OCI-LY7 (cell line): ENCODE measurements at regions of chr5 and their contacts with region 1.

Region 1: DNA sequence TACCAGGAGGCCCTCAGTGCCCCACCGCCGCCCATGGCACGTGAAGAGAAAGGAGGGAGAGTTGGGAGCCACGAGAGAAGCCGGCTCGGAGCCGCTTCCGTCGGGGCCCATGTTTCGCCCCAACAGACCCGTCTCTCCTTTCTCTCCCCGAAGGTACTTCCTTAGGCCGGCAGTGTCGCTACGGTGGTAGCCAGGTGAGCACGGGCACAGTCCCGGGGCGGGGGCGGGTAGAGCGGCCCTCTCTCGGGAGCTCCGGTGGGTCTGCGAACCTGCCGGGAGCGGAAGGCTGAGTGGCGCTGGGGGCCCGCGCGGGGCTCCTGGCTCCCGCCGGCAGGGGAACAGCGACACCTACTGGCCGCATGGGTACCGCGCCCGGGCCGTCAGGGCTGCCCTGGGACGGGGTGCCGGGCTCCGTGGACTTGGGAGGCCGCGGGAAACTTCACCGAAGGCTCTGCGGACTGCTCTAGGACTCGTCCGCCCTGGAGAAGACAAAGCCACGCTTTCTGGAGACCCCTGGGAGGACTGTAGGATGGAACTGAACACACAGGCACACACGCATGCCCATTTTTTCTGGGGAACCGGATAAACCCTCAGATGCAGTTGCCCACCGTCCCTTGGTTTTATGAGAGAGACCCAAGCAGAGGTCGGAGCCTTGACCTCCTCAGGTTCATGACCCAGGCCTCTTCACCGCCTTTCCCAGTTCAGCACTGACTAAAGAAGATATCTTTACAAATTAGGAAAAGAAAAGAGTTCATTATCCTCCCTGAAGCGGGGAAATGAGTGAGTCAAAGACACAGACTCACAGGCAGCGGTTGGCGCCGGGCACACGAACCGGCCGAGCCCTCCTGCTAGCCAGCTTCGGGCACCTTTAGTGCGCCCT is 202.5 kb downstream of the MEF2C start:
- DNase-seq: peak; percentile 72
- H3K4me3 ChIP-seq: peak overlapping the region; percentile 27
- H3K27ac ChIP-seq: no peak overlapping the region
- H3K4me1 ChIP-seq: peaks cover 13% of the 10 kb centered on the region
- CTCF ChIP-seq: peak; percentile 88

Region 2: DNA sequence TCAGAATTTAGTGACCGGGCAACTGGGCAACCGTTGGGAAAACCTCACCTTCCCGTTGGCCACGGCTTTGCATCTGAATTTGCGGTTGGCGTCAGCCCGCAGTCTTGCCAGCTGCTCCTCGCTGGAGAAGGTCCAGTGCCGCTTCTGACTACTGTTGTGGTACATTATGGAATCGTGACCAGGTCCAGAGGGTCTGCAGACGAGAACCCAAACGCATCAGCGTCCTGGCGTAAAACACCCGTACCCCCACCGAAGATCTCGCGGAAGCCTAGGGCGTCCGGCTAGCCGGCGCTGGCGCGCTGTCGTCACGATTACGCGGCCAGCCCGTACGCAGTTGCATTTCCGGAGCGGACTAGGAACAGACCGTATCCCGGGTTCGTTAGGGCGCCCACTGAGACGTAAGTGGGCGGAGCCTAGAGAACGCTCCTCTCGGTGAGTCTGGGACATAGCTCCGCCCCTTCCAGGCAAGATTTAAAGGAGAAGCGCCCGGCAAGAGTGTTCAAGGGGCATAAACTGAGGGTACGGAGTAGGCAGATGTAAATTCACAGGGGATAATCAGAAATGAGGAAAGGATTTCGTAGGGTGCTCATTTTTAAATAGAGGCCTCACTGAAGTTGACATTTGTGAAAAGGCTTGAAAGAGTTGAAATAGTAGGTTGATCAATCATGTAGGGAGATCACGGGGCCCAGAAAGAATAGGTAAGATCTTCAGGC is 1267.7 kb before region 1 on chr5 and contains the start of gene CCNH:
- CTCF ChIA-PET with region 1: no interaction called
- POLR2A ChIA-PET with region 1: interaction called, 3 read pairs
- intact Hi-C with region 1: loop called (anchors 2 kb)
- DNase-seq: peak; percentile 99
- H3K4me3 ChIP-seq: peak within 1 kb of the TSS; percentile 93
- H3K27ac ChIP-seq: peak within 1 kb of the TSS; percentile 59
- H3K4me1 ChIP-seq: peaks cover 28% of the 10 kb centered on the region
- CTCF ChIP-seq: no peak
- total RNA-seq, gene CCNH: 96.5 and 98.4 TPM in 2 replicates

Region 3: DNA sequence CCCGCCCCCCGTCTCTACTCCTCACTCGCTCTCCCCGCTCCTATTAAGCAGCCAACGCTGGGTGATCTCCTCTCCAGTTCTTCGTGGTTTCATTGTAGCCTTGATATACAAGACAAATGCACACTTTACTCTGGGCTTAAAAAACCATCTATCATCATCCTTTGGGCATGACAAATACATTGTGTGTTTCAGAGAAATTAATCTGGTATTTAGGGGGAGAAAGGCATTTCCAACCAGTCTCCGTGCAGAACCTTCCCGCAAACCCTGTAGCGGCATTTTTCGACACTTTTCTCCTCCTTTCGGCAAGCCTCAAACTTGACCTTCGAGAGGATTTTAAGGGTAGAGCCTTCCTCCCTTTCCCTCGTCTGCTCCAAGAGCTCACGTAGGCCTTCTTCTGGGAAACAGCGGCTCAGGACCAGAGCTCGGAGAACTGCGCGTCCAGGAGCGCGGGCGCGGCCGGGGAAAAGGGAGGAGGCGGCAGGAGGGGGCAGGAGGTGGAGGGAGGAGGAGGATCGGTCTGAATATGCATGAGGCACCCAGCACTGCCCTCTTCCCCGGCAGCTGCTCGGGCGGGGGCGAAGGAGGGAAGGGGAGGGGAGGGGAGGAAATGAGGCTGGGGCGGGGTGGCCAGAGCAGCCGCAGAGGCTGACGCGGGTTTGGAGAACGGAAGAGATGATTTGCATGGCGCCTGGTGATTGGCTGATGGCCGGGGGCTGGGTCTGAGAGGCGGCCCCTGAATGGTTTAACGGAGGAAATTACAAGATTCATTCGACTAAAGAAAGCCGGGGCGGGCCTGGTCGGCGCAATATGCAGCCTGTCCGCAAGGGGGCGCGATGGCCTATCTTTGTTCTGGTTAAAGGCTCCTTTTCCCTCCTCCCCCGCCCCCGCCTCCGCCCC is 539.4 kb before region 1 on chr5:
- CTCF ChIA-PET with region 1: no interaction called
- POLR2A ChIA-PET with region 1: interaction called, 4 read pairs
- intact Hi-C with region 1: loop called (anchors 2 kb)
- DNase-seq: peak; percentile 54
- H3K4me3 ChIP-seq: no peak overlapping the region
- H3K27ac ChIP-seq: no peak overlapping the region
- H3K4me1 ChIP-seq: peaks cover 5% of the 10 kb centered on the region
- CTCF ChIP-seq: peak; percentile 53

Region 4: DNA sequence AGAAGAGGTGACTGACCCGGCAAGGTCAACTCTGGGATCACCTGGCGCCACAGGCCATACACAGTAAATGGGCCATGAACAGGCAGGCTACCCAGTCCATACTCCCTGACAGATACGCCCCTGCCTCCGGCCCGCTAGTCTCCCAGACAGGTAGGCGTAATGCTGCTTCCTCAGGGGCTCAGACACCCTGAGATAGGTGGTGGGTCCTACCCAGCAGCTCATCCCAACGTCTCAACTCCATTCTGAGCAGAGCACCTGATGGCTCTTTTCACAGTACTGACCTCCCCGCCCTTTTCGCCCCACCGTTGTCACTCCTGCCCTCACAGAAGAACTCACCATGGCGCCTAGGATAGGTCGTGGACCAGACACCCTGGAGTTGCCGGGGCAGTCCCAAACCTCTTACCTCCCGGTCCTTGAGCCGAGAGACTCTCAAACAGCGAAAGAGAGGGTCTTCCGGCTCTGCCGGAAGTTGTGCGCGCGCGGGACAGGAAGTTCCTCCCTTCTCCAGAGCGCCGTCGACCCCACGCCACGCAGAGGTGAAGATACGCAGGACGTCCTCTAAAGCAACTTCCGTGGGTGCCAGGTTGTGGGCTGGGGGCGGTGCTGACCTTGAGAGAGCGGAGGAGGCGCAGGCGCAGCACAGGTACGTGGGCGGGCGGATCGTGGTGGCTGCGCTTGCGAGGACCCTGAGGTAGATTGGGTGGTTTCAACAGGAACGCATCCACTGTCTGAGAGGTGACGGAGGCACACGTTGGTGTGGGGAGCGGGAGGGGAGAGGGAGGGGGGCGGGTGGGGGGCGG is 411.9 kb before region 1 on chr5 and contains the start of gene TMEM161B:
- CTCF ChIA-PET with region 1: no interaction called
- POLR2A ChIA-PET with region 1: no interaction called
- intact Hi-C with region 1: loop called (anchors 2 kb)
- DNase-seq: peak; percentile 95
- H3K4me3 ChIP-seq: peak within 1 kb of the TSS; percentile 90
- H3K27ac ChIP-seq: peak within 1 kb of the TSS; percentile 74
- H3K4me1 ChIP-seq: peaks cover 37% of the 10 kb centered on the region
- CTCF ChIP-seq: no peak
- total RNA-seq, gene TMEM161B: 17.2 and 20.3 TPM in 2 replicates

Region 5: DNA sequence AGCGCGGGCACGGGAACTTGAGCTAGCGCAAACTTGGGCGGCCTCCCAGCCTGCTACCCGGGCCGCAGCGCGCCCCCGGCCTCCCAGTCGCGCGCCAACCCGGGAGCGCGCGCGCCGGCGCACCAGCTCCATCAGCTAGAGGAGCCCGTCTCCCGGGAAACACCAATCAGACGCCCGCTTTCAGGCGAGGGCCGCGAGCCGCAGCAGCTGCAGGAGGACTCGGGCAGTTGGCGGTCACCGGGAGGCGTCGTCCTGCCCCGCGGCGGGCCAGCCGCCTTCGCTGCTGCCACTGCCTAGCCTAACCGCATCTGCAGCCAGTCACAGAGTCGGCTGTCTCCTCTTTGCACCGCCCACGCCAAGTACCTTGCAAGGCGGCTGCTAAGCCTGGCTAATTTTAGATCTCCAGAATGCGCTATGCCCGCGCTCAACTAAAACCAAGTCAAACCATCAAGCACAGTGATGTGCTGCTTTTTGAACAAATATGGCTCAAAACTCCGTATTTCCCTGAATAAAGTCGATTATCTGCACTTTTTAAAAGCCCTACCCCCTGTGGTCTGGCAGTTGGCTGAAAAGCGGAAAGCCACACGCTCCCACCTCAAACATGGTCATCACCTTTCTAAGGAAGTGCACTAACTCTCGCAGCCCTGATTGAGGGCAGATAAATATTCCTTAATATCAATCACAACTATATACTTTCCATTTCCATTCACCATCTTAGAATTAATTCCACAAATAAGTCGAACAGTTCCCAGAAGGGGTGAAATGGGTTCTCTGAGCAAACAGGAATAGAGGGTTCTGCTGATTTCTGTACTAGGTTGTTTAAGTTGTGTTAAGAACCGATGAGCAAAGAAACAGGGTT is 19.3 kb before region 1 on chr5:
- CTCF ChIA-PET with region 1: interaction called, 16 read pairs
- POLR2A ChIA-PET with region 1: interaction called, 88 read pairs
- intact Hi-C with region 1: no loop called
- DNase-seq: peak; percentile 83
- H3K4me3 ChIP-seq: peak overlapping the region; percentile 68
- H3K27ac ChIP-seq: no peak overlapping the region
- H3K4me1 ChIP-seq: peaks cover 30% of the 10 kb centered on the region
- CTCF ChIP-seq: no peak

Region 6: GRCh38 chr5:88729084-88729828 is 48.8 kb after region 1 on chr5:
- CTCF ChIA-PET with region 1: no interaction called
- POLR2A ChIA-PET with region 1: interaction called, 4 read pairs
- intact Hi-C with region 1: loop called (anchors 2 kb)
- DNase-seq: peak; percentile 82
- H3K4me3 ChIP-seq: no peak overlapping the region
- H3K27ac ChIP-seq: no peak overlapping the region
- H3K4me1 ChIP-seq: peaks cover 27% of the 10 kb centered on the region
- CTCF ChIP-seq: peak; percentile 96

Region 7: GRCh38 chr5:88883059-88883835 is 202.8 kb after region 1 on chr5 and contains the start of gene MEF2C:
- CTCF ChIA-PET with region 1: interaction called, 5 read pairs
- POLR2A ChIA-PET with region 1: no interaction called
- intact Hi-C with region 1: loop called (anchors 1 kb)
- DNase-seq: peak; percentile 78
- H3K4me3 ChIP-seq: peak within 1 kb of the TSS; percentile 73
- H3K27ac ChIP-seq: peak within 1 kb of the TSS; percentile 2
- H3K4me1 ChIP-seq: peaks cover 39% of the 10 kb centered on the region
- CTCF ChIP-seq: no peak
- total RNA-seq, gene MEF2C: 5.5 and 9.5 TPM in 2 replicates